ENCODE measurements at regions of chr16 and their contacts with region 1.

Region 1: DNA sequence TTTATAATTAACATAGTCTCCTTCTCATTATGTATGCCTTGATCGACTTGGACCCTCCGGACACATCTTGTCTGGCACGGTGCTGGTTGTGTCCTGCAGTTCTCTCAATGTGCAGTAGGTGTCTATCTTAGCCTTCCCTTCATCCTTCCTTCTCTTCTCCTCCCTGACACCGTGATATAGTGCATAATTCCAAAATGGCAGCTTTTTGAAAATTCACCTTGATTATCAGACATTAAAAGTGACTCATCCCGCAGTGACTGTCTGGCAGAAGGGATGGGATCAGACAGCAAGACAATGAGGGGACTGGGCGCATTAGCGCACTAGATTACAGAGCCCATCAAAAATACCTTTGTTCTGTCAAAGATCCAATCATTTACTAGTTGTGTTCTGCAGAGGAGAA is 70.0 kb upstream of the PMFBP1 start:
- DNase-seq: peak; percentile 16 to 40 (median 27)
- ATAC-seq: peak; percentile 84
- H3K4me3 ChIP-seq: no peak overlapping the region
- H3K27ac ChIP-seq: no peak overlapping the region
- H3K4me1 ChIP-seq: no peaks in the 10 kb centered on the region
- H3K27me3 ChIP-seq: 0 out of 5 replicates have a peak, but pooled peaks cover 0 to 1% of the 10 kb centered on the region in 2 experiments
- CTCF ChIP-seq: peak; percentile 58 to 74 (median 66)
- EP300 ChIP-seq: no peak
- POLR2A ChIP-seq: no peak
- RAD21 ChIP-seq: peak; percentile 68 to 70

Region 2: GRCh38 chr16:72467157-72467759 is 225.3 kb after region 1 on chr16:
- CTCF ChIA-PET with region 1: interaction called, 4 read pairs
- POLR2A ChIA-PET with region 1: no interaction called
- in situ Hi-C with region 1: no loop called
- intact Hi-C with region 1: loop called (anchors 5 kb)
- DNase-seq: peak; percentile 7 to 30 (median 11)
- ATAC-seq: peak; percentile 66
- H3K4me3 ChIP-seq: no peak overlapping the region
- H3K27ac ChIP-seq: no peak overlapping the region
- H3K4me1 ChIP-seq: no peaks in the 10 kb centered on the region
- H3K27me3 ChIP-seq: no peaks in the 10 kb centered on the region
- CTCF ChIP-seq: peak; percentile 48 to 63 (median 53); a peak in 5 of 6 replicates
- EP300 ChIP-seq: no peak
- POLR2A ChIP-seq: no peak
- RAD21 ChIP-seq: peak; percentile 39 to 59; a peak in 3 of 4 replicates